ENCODE measurements at regions of chrX and their contacts with region 1.

Region 1: GRCh38 chrX:133999031-133999705 is 13.8 kb upstream of the GPC3 start:
- DNase-seq: no peak

Region 2: GRCh38 chrX:133838761-133839676 is 160.1 kb before region 1 on chrX:
- CTCF ChIA-PET with region 1: interaction called, 11 read pairs
- POLR2A ChIA-PET with region 1: interaction called, 3 read pairs
- DNase-seq: peak; percentile 68

Measured in HEK293T (cell line).